ENCODE measurements at regions of chr2 and their contacts with region 1.

Region 1: GRCh38 chr2:234500394-234501006 is 3.6 kb upstream of the ARL4C start:
- DNase-seq: peak; percentile 73 to 85 (median 78)
- H3K4me3 ChIP-seq: peak overlapping the region in 1 of 2 donors; percentile 9
- H3K4me3 Mint-ChIP-seq: peak overlapping the region; percentile 57 to 91 (median 83)
- H3K27ac ChIP-seq: peak overlapping the region; percentile 77
- H3K27ac Mint-ChIP-seq: peak overlapping the region; percentile 81 to 97 (median 94)
- H3K4me1 ChIP-seq: peaks cover 32% of the 10 kb centered on the region
- H3K4me1 Mint-ChIP-seq: peaks cover 26 to 41% (median 30%) of the 10 kb centered on the region in 4 donors
- H3K27me3 ChIP-seq: no peaks in the 10 kb centered on the region
- H3K27me3 Mint-ChIP-seq: no peaks in the 10 kb centered on the region

Region 2: GRCh38 chr2:233854241-233854981 is 646.1 kb before region 1 on chr2 and contains the start of gene HJURP:
- CTCF ChIA-PET with region 1: interaction called, 3 read pairs
- POLR2A ChIA-PET with region 1: no interaction called
- intact Hi-C with region 1: loop called (anchors 5 kb)
- DNase-seq: peak; percentile 88 to 90 (median 89)
- H3K4me3 ChIP-seq: peak within 1 kb of the TSS; percentile 70 to 83
- H3K4me3 Mint-ChIP-seq: peak within 1 kb of the TSS; percentile 88 to 95 (median 94)
- H3K27ac ChIP-seq: peak within 1 kb of the TSS; percentile 20
- H3K27ac Mint-ChIP-seq: peak within 1 kb of the TSS; percentile 43 to 94 (median 82)
- H3K4me1 ChIP-seq: peaks cover 26% of the 10 kb centered on the region
- H3K4me1 Mint-ChIP-seq: peaks cover 4 to 38% (median 24%) of the 10 kb centered on the region in 4 donors
- H3K27me3 ChIP-seq: no peaks in the 10 kb centered on the region
- H3K27me3 Mint-ChIP-seq: peaks cover 1 to 10% of the 10 kb centered on the region in 2 donors
- total RNA-seq, gene HJURP: 0.19 to 0.44 TPM

Region 3: GRCh38 chr2:233929352-233930022 is 571.0 kb before region 1 on chr2:
- CTCF ChIA-PET with region 1: no interaction called
- POLR2A ChIA-PET with region 1: no interaction called
- intact Hi-C with region 1: no loop called
- DNase-seq: no peak
- H3K4me3 ChIP-seq: no peak overlapping the region
- H3K4me3 Mint-ChIP-seq: no peak overlapping the region
- H3K27ac ChIP-seq: no peak overlapping the region
- H3K27ac Mint-ChIP-seq: no peak overlapping the region
- H3K4me1 ChIP-seq: no peaks in the 10 kb centered on the region
- H3K4me1 Mint-ChIP-seq: peaks cover 0 to 2% (median under 1%) of the 10 kb centered on the region in 4 donors
- H3K27me3 ChIP-seq: no peaks in the 10 kb centered on the region
- H3K27me3 Mint-ChIP-seq: peaks cover 23 to 44% of the 10 kb centered on the region in 2 donors

Region 4: DNA sequence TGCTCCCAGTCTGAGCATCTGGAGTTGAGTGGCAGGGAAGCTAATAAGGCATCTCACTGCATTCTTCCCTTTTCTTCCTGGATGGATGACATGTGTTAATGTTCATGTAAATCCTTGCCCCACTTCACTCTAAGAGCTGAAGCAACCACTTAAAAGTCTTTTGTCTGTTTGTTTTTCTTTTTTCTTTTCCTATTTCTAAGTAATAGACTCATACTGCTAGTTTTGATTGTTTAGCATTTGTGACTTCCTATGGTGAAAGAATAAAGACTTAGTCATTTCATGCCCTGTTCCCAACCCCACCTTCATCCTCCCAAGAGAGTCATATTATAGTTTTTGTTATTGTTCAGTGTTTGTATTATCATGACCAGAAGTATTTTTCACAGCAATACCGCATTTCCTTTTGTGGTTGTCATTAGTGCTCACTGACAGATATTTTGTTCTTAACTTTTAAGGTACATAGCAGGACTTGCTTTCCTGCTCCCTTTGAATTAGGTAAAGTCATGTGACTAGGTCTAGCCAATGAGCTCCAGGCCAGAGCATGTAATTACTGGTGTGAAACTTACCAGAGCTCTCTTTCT is 468.1 kb before region 1 on chr2:
- CTCF ChIA-PET with region 1: interaction called, 3 read pairs
- POLR2A ChIA-PET with region 1: interaction called, 18 read pairs
- intact Hi-C with region 1: loop called (anchors 1 kb)
- DNase-seq: peak; percentile 67 to 87 (median 82)
- H3K4me3 ChIP-seq: no peak overlapping the region
- H3K4me3 Mint-ChIP-seq: peak overlapping the region; percentile 1 to 64 (median 38)
- H3K27ac ChIP-seq: no peak overlapping the region
- H3K27ac Mint-ChIP-seq: peak overlapping the region; percentile 56 to 91 (median 79)
- H3K4me1 ChIP-seq: peaks cover 60% of the 10 kb centered on the region
- H3K4me1 Mint-ChIP-seq: peaks cover 38 to 64% (median 49%) of the 10 kb centered on the region in 4 donors
- H3K27me3 ChIP-seq: no peaks in the 10 kb centered on the region
- H3K27me3 Mint-ChIP-seq: peaks cover 0 to 1% of the 10 kb centered on the region in 2 donors

Region 5: DNA sequence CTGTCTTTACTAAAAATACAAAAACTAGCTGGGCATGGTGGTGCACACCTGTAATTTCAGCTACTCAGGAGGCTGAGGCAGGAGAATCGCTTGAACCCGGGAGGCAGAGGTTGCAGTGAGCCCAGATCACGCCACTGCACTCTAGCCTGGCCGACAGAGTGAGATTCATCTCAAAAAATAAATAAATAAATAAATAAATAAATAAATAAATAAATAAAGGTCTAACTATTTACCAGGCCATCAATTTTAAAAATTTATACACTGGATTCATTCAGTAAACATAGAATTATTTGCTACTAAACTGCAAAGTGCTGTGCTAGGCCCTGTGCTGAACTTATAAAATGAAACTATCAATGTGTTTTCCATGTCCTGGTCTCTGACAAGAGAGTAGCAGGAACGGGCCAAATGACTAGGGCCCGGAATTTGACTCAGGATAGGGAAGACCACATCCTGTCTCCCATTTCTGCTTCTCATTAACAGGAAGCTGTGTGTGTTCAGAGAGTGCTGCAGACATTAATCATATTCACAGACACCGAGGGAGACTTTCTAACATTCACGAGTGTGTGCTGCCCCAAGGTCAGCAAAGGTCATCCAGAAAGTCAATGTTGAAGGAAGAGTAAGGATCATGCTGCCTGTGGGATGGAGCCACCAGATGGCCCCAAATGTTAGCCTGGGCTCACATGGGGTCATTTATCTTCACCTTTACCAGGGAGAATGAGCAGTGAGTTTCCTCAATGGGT is 354.2 kb before region 1 on chr2:
- CTCF ChIA-PET with region 1: interaction called, 12 read pairs
- POLR2A ChIA-PET with region 1: interaction called, 10 read pairs
- intact Hi-C with region 1: no loop called
- DNase-seq: no peak
- H3K4me3 ChIP-seq: no peak overlapping the region
- H3K4me3 Mint-ChIP-seq: peak overlapping the region in 7 of 8 donors; percentile 4 to 77 (median 5)
- H3K27ac ChIP-seq: no peak overlapping the region
- H3K27ac Mint-ChIP-seq: peak overlapping the region in 6 of 7 donors; percentile 53 to 88 (median 84)
- H3K4me1 ChIP-seq: peaks cover 45% of the 10 kb centered on the region
- H3K4me1 Mint-ChIP-seq: peaks cover 40 to 80% (median 53%) of the 10 kb centered on the region in 4 donors
- H3K27me3 ChIP-seq: no peaks in the 10 kb centered on the region
- H3K27me3 Mint-ChIP-seq: no peaks in the 10 kb centered on the region

Region 6: GRCh38 chr2:234368861-234369261 is 131.6 kb before region 1 on chr2:
- CTCF ChIA-PET with region 1: interaction called, 3 read pairs
- POLR2A ChIA-PET with region 1: interaction called, 16 read pairs
- intact Hi-C with region 1: no loop called
- DNase-seq: peak; percentile 31 to 70 (median 37)
- H3K4me3 ChIP-seq: no peak overlapping the region
- H3K4me3 Mint-ChIP-seq: peak overlapping the region in 4 of 8 donors; percentile 60 to 77 (median 61)
- H3K27ac ChIP-seq: peak overlapping the region; percentile 33
- H3K27ac Mint-ChIP-seq: peak overlapping the region; percentile 82 to 96 (median 93)
- H3K4me1 ChIP-seq: peaks cover 78% of the 10 kb centered on the region
- H3K4me1 Mint-ChIP-seq: peaks cover 50 to 79% (median 64%) of the 10 kb centered on the region in 4 donors
- H3K27me3 ChIP-seq: no peaks in the 10 kb centered on the region
- H3K27me3 Mint-ChIP-seq: no peaks in the 10 kb centered on the region

Region 7: DNA sequence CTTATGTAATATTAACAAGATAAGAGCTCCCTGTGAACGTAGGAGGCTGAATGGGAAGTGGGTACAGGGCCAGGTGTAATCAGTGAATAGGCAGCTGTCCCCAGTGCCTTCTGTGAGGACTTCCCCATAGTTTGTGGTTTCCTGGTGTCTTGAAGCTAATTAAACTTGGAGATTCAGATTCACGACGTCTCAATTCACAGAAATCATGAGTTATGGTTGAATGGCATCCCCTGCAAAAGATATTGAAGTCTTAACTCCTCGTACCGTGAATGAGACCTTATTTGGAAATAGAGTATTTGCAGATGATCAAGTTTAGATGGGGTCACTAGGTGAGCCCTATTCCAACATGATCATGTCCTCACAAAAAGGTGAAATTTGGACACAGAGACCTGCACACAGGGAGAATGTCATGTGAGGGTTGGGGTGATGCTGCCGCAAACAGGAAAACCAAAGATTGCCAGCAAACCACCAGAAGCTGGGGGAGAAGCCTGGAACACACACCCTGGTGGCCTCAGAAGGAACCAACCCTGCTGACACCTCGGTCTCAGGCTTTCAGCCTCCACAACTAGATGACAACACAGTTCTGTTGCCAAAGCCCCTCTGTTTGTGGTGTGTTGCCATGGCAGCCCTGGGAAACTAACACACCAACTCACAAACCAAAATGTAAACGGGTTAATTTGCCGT is 16.8 kb before region 1 on chr2:
- CTCF ChIA-PET with region 1: interaction called, 15 read pairs
- POLR2A ChIA-PET with region 1: interaction called, 92 read pairs
- intact Hi-C with region 1: no loop called
- DNase-seq: peak; percentile 86 to 95 (median 88)
- H3K4me3 ChIP-seq: peak overlapping the region in 1 of 2 donors; percentile 5
- H3K4me3 Mint-ChIP-seq: peak overlapping the region; percentile 52 to 87 (median 76)
- H3K27ac ChIP-seq: peak overlapping the region; percentile 98
- H3K27ac Mint-ChIP-seq: peak overlapping the region; percentile 97 to 99 (median 98)
- H3K4me1 ChIP-seq: peaks cover 81% of the 10 kb centered on the region
- H3K4me1 Mint-ChIP-seq: peaks cover 64 to 94% (median 78%) of the 10 kb centered on the region in 4 donors
- H3K27me3 ChIP-seq: no peaks in the 10 kb centered on the region
- H3K27me3 Mint-ChIP-seq: no peaks in the 10 kb centered on the region

Region 8: DNA sequence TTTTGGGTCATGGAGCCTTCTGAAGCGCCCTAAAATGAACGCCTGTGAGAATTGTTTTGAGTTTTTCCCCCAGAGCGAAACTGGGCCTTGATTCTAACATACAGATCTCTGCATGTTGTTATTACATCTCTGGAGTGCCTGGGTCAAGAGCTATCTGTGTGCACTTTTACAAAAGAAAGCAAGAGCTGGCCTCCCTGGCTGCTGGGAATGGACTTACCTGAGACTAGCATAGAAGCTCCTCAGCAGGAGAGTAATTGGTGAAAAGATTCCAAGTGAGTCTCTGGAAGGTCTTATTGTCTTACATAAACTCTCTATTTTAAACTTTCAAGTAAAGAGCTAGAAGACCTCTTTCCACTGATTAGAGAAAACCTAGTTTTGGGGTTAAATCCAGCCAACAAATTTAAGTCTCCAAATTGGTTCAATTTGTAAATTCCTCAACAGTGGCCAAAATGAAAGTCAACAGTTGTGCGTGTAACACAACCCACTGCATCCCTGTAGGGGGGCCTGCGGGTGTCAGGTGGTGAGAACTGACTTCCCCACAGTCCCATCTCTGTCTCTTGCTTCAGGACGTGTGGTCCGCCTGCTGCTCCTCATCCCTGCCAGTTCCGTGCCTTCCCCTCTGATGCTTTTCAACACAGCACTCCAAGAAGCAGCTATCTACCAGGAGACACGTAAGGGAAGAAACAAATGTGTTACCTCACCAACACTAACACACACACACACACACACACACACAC is 657.4 kb after region 1 on chr2:
- CTCF ChIA-PET with region 1: no interaction called
- POLR2A ChIA-PET with region 1: no interaction called
- intact Hi-C with region 1: no loop called
- DNase-seq: no peak
- H3K4me3 ChIP-seq: no peak overlapping the region
- H3K4me3 Mint-ChIP-seq: no peak overlapping the region
- H3K27ac ChIP-seq: no peak overlapping the region
- H3K27ac Mint-ChIP-seq: no peak overlapping the region
- H3K4me1 ChIP-seq: no peaks in the 10 kb centered on the region
- H3K4me1 Mint-ChIP-seq: no peaks in the 10 kb centered on the region
- H3K27me3 ChIP-seq: no peaks in the 10 kb centered on the region
- H3K27me3 Mint-ChIP-seq: peaks cover 14 to 26% of the 10 kb centered on the region in 2 donors

Region 9: GRCh38 chr2:236224501-236224900 is 1724.0 kb after region 1 on chr2:
- CTCF ChIA-PET with region 1: no interaction called
- POLR2A ChIA-PET with region 1: no interaction called
- intact Hi-C with region 1: no loop called
- DNase-seq: no peak
- H3K4me3 ChIP-seq: no peak overlapping the region
- H3K4me3 Mint-ChIP-seq: no peak overlapping the region
- H3K27ac ChIP-seq: no peak overlapping the region
- H3K27ac Mint-ChIP-seq: no peak overlapping the region
- H3K4me1 ChIP-seq: no peaks in the 10 kb centered on the region
- H3K4me1 Mint-ChIP-seq: no peaks in the 10 kb centered on the region
- H3K27me3 ChIP-seq: no peaks in the 10 kb centered on the region
- H3K27me3 Mint-ChIP-seq: peaks cover 8 to 17% of the 10 kb centered on the region in 2 donors